ENCODE measurements at regions of chr7 and their contacts with region 1.

Region 1: DNA sequence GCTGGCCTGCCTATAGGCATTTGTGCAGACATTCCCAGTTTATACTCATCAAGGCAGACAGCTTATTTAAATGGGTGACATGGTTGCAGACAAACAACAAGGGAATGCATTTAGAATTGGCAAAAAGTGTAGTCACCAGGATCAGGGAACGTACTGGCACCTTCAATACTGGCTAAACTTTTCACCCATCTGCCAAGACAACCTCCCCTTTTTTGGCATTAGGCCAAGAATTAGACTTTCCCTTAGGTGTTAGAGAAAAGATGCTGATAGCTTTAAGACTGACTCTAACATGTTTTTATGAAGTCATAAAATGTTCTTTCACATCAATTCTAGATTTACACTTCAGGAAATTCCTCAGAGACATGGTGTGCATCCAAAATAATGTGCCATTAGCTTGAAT is 365.9 kb downstream of the PHTF2 start:
- DNase-seq: no peak
- ATAC-seq: no peak
- H3K4me3 ChIP-seq: no peak overlapping the region
- H3K27ac ChIP-seq: no peak overlapping the region
- H3K4me1 ChIP-seq: no peaks in the 10 kb centered on the region
- H3K27me3 ChIP-seq: peaks cover 40% of the 10 kb centered on the region
- CTCF ChIP-seq: no peak

Region 2: GRCh38 chr7:78412217-78412858 is 247.9 kb after region 1 on chr7:
- CTCF ChIA-PET with region 1: no interaction called
- POLR2A ChIA-PET with region 1: interaction called, 18 read pairs
- intact Hi-C with region 1: no loop called
- DNase-seq: no peak
- ATAC-seq: no peak
- H3K4me3 ChIP-seq: no peak overlapping the region
- H3K27ac ChIP-seq: no peak overlapping the region
- H3K4me1 ChIP-seq: no peaks in the 10 kb centered on the region
- H3K27me3 ChIP-seq: peaks cover 54% of the 10 kb centered on the region
- CTCF ChIP-seq: no peak

Measured in PC-3 (cell line).